ENCODE measurements at regions of chr5 and their contacts with region 1.

Region 1: DNA sequence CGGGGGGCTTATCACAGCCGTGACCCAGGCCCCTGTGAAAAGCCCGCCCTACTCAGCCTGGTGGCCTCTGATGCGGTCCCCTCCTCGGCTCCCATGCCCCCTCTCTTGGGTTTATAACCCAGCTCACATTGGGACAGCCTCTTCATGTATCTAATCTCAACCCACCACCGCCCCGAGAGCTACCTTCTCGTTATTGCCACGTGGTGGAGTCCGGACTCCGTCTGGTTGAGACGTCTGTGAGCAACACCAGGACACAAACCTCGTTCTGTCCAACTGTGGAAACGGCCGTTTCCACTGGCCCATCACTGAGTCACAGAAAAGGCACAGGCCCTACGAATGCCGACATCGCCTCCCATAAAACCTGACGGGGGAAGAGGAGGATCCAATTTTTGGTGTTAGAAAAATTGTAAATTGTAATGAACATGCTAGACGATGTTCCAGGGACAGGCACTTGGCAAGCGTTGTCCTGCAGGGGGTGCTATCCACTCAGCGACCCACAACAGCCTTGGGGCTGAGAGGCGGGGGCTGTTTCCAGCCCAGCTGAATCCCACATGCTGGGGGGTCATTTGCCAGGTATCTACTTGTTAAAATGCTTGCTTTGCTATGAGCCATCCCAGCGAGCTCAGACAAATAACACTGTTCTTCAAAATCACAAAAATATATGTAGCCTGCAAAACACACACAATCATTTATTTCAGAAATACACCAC is 37.3 kb upstream of the N4BP3 start:
- DNase-seq: peak; percentile 85
- CTCF ChIP-seq: peak; percentile 79

Region 2: GRCh38 chr5:177592010-177592834 is 483.8 kb before region 1 on chr5 and contains the start of gene TMED9:
- CTCF ChIA-PET with region 1: no interaction called
- POLR2A ChIA-PET with region 1: no interaction called
- DNase-seq: peak; percentile 94
- CTCF ChIP-seq: no peak

Region 3: GRCh38 chr5:177994561-177995190 is 81.3 kb before region 1 on chr5:
- CTCF ChIA-PET with region 1: no interaction called
- POLR2A ChIA-PET with region 1: no interaction called
- DNase-seq: no peak
- CTCF ChIP-seq: no peak

Region 4: DNA sequence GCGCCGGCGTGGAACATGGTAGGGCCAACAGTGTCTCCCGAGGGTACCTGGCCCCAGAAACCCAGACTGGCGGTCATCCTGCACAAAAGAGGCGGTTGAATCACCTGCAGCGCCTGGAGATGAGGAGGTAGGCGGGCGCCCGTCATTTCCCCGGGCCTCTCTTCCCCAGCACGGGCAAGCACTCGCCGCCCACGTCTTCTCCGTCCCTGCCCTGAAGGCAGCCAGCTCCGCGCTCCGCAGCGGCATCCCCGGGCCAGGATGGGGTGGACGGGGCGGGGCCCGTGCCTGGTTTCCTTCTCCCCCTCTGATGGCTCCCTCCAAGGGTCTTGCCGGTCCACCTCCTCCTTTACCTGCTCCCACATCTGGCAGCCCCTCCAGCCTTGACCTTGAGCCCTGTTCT is 10.3 kb after region 1 on chr5:
- CTCF ChIA-PET with region 1: interaction called, 19 read pairs
- POLR2A ChIA-PET with region 1: no interaction called
- DNase-seq: no peak
- CTCF ChIP-seq: no peak

Region 5: GRCh38 chr5:178120868-178121357 is 44.9 kb after region 1 on chr5:
- CTCF ChIA-PET with region 1: interaction called, 28 read pairs
- POLR2A ChIA-PET with region 1: no interaction called
- DNase-seq: peak; percentile 88
- CTCF ChIP-seq: peak; percentile 81

Region 6: DNA sequence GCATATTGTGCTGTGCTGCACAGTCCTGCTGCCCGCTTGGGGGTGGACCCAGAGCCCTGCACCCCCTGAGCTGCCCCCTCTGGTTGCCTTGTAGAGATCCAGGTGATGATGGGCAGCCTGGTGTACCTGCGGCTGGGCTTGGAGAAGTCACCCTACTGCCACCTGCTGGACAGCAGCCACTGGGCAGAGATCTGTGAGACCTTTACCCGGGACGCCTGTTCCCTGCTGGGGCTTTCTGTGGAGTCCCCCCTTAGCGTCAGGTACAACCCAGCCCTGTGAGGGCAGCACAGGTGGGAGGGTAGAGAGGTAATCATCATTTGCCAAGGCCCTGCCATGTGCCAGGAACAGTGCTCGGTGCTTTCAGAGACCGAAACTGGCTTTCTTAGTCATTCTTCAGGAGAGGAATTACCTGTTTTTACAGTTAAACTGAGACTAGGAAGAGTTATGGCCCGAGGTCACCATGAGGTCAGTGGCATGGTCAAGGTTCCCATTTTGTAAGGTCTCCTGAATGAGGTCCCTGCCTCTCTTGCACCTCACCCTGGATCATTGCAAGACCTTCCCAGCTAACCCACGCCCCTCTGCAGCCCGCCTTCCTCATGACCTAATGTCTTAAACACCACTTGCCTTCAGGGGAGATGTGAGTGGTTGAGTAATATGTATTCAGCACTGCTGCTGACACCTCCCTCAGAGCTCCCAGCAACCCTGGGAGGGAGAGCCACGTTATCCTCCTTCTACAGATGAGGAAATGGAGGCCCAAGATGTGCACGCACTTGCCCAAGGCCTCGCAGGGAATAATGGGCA is 70.2 kb after region 1 on chr5:
- CTCF ChIA-PET with region 1: interaction called, 155 read pairs
- POLR2A ChIA-PET with region 1: no interaction called
- DNase-seq: peak; percentile 82
- CTCF ChIP-seq: peak; percentile 91

Region 7: GRCh38 chr5:178163772-178164735 is 88.1 kb after region 1 on chr5:
- CTCF ChIA-PET with region 1: interaction called, 73 read pairs
- POLR2A ChIA-PET with region 1: interaction called, 4 read pairs
- DNase-seq: peak; percentile 92
- CTCF ChIP-seq: peak; percentile 97